Stomach (tissue), 19 donors: ENCODE measurements at regions of chr6 and their contacts with region 1.

Region 1: DNA sequence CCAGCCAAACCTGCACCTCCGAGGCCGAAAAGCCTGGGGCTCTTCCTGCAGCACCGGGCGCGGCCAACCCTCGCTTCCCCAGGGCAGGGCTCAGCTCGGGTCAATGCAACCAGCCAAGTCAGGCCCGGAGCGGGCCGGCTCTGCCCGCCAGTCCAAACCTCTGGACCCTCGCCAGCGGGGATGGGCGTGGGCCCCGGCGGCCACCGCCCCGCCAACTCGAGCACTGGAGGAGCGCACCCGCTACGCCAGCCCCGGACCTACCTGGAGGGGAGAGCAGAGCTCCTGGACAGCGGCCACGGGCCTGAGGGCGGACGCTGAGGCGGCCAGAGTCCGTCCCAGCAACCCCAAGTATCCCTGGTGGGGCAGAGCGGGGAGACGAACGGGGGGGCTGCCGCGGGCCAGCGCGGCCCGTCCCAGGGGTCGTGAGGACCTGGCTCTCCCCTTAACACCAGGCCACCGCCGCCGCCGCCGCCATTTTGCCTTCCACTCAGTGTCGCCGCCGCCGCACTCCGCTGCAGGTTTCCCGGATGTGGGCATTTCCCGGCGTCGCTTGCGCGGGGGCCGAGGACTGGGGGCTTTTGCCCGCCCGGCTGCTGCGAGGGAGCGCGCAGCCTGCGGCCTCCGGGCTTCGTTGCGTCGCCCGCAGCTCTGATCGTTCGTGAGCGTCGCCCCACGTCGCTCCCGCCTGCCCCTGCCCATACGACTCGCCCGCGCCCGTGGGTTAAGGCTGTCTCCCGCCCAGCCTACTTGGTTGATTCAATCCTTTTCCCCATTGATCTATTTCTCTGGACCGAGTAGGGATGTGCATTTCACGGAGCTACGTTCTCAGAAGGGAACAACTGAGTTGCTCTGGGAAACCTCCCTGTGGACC is at the start of gene LATS1:
- DNase-seq: peak; percentile 92 to 96
- H3K4me3 ChIP-seq: peak within 1 kb of the TSS; percentile 62 to 93 (median 78)
- H3K27ac ChIP-seq: peak within 1 kb of the TSS; percentile 98 to 100 (median 98)
- H3K4me1 ChIP-seq: peaks cover 19 to 53% (median 31%) of the 10 kb centered on the region in 4 donors
- H3K27me3 ChIP-seq: no peaks in the 10 kb centered on the region
- CTCF ChIP-seq: no peak
- EP300 ChIP-seq: no peak
- POLR2A ChIP-seq: peak in 2 of 4 donors; percentile 8 to 69
- total RNA-seq, gene LATS1: 10.7 to 109 (median 28.4) TPM

Region 2: DNA sequence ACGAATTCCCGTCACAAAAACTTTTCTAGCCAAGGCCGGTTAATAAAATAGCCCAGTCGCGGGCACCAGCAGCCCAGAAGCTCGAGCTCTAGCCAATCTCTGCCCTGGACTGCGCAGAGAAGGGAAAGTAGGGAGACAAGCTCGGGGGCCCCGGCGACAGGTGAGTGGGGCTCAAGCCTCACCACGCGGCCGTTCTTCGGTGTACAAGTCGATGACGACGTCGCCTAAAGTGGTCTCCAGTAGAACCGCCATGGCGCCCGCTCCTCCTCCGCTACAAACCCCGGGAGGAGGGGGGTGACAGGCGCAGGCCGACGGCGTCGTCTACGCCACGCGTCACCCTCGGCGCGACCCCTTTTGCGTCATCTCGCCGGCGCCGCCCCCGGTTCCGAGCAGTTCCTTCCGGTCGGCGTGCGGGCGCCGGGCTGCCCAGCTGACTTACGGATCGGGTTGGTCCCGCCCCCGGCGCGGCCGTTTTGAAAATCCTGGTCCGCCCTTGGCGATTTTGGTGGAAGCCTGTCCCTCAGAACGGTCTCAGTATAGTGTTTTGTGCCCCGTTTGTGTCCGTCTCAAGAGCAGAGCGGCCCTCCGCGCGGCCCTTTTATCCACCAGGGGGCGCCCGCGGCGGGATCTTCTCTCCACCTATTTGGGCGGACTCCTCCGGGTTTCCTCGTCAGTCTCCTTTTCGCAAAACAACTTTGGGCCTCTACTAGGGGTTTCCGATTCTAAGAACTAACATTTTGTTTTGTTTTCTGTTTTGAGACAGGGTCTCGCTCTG is 171.9 kb before region 1 on chr6 and contains the start of gene PPIL4:
- intact Hi-C with region 1: loop called (anchors 10 kb)
- DNase-seq: peak; percentile 98 to 99
- H3K4me3 ChIP-seq: peak within 1 kb of the TSS; percentile 75 to 88 (median 86)
- H3K27ac ChIP-seq: peak within 1 kb of the TSS; percentile 93 to 98 (median 97)
- H3K4me1 ChIP-seq: peaks cover 28 to 43% (median 36%) of the 10 kb centered on the region in 4 donors
- H3K27me3 ChIP-seq: peaks cover 0 to 3% (median 0%) of the 10 kb centered on the region in 3 donors
- CTCF ChIP-seq: peak in 5 of 7 experiments; percentile 55 to 86 (median 77)
- EP300 ChIP-seq: peak; percentile 64
- POLR2A ChIP-seq: peak in 2 of 4 donors; percentile 63 to 84
- total RNA-seq, gene PPIL4: 7.6 to 59.7 (median 35.1) TPM

Region 3: DNA sequence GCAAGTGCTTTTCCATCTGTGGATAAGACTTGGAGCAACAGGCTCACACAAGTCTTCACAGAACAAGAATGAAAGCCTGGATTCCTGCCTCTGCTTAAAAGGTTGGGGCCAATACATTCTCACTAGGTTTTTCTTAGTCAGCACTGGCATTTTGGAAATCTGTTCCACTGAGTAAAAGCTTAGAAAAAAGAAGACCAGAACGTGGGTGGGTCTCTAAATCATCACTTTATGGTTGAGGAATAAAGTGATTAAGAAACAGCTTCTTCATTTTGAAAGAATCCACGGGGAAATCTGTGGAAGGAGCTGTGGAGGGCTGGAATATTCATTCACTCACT is 435.7 kb after region 1 on chr6:
- intact Hi-C with region 1: no loop called
- DNase-seq: no peak
- H3K4me3 ChIP-seq: no peak overlapping the region
- H3K27ac ChIP-seq: no peak overlapping the region
- H3K4me1 ChIP-seq: peaks cover 0 to 8% (median 4%) of the 10 kb centered on the region in 4 donors
- H3K27me3 ChIP-seq: peaks cover 0 to 55% (median 15%) of the 10 kb centered on the region in 3 donors
- CTCF ChIP-seq: no peak
- EP300 ChIP-seq: no peak
- POLR2A ChIP-seq: no peak